Activated CD8-positive, alpha-beta memory T cell treated with anti-CD3 and anti-CD28 coated beads, Interleukin-2, amount 10 ng/mL, durations not matched to agents 7 days and 5 days (primary cell): ENCODE measurements at regions of chr15 and their contacts with region 1.

Region 1: GRCh38 chr15:92226014-92226612 is 167.6 kb upstream of the ST8SIA2 start:
- DNase-seq: no peak
- ATAC-seq: no peak
- H3K4me3 Mint-ChIP-seq: no peak overlapping the region
- H3K27ac Mint-ChIP-seq: no peak overlapping the region
- H3K4me1 Mint-ChIP-seq: no peaks in the 10 kb centered on the region
- H3K27me3 Mint-ChIP-seq: peaks cover 11% of the 10 kb centered on the region

Region 2: GRCh38 chr15:92097474-92098178 is 128.5 kb before region 1 on chr15:
- CTCF ChIA-PET with region 1: interaction called, 21 read pairs
- DNase-seq: peak; percentile 72
- ATAC-seq: peak; percentile 72
- H3K4me3 Mint-ChIP-seq: no peak overlapping the region
- H3K27ac Mint-ChIP-seq: peak overlapping the region; percentile 34
- H3K4me1 Mint-ChIP-seq: peaks cover 55% of the 10 kb centered on the region
- H3K27me3 Mint-ChIP-seq: no peaks in the 10 kb centered on the region

Region 3: DNA sequence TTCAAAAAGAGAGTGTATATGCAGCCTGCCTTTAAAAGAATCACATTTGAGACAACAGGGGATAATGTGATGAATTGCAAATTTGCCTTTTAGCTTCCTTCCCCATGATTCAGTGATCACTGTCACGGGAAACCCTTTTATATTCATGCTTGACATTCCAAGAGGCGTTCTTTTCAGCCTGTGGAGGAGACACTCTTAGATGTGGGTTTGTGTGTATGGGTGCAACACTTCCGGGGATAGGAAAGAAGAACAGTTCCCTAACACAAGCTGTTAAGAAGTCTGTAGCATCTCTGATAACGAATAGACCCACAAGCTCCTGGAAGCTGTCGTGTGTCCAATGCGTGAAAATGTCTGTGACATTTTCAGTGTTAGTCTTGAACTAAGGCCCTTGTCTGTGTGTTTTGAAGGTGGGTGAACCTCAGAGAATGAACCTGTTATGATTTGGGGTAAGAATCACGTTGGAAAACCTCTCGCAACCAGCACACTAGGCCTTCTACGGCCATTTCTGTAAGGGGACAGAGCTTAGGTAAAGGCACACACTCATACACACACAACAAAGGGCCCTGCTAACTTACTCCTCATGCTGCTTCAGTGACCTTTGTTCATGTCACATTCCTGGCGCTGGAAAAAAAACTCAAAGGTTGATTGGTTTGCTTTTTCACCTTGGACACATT is 61.6 kb before region 1 on chr15:
- CTCF ChIA-PET with region 1: no interaction called
- DNase-seq: no peak
- ATAC-seq: no peak
- H3K4me3 Mint-ChIP-seq: no peak overlapping the region
- H3K27ac Mint-ChIP-seq: no peak overlapping the region
- H3K4me1 Mint-ChIP-seq: peaks cover 14% of the 10 kb centered on the region
- H3K27me3 Mint-ChIP-seq: no peaks in the 10 kb centered on the region

Region 4: DNA sequence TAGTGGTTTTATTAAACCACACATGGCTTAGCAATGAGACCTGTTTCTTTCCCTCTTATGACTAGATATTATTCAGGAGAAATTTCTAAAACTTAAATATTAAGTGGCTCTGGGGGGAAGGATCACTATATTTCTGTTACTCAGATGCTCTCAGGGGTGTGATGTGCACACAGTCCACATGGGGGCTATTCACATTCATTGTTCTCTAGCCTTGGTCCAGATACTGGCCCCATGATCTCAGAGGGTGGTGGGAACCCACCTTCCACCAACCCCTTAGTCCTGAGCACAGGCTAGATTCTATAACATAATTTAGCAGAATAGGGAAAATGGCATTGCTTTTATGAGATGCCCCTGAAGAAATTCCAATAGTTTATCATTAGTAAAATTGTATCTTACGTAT is 18.6 kb after region 1 on chr15:
- CTCF ChIA-PET with region 1: no interaction called
- DNase-seq: no peak
- ATAC-seq: no peak
- H3K4me3 Mint-ChIP-seq: no peak overlapping the region
- H3K27ac Mint-ChIP-seq: no peak overlapping the region
- H3K4me1 Mint-ChIP-seq: no peaks in the 10 kb centered on the region
- H3K27me3 Mint-ChIP-seq: peaks cover 31% of the 10 kb centered on the region